Right ventricle myocardium superior (tissue), 1 donor: ENCODE measurements at regions of chr15 and their contacts with region 1.

Region 1: DNA sequence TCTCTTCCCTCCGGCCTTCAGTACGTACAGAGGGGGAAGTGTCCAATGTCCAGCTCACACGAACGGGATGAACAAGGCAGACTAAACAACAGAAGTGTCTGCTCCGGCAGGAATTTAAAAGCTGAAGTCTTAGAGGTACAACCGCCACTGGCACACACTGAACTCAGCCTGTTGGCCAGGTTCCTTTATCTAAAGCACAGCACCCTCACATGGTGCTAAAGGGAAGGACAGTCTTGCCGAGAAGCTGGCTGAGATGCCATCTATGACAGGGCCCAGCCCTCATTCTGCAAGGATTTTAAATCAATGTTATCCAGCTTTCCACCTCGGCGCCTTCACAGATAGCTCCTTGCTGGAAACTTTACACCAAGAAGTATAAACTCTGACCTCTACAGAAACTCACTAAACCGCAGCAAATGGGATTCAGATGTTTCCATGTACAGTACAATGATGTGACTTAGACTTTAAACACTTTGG is 2.8 kb downstream of the ADAMTS17 start:
- DNase-seq: peak; percentile 60
- ATAC-seq: peak; percentile 62

Region 2: DNA sequence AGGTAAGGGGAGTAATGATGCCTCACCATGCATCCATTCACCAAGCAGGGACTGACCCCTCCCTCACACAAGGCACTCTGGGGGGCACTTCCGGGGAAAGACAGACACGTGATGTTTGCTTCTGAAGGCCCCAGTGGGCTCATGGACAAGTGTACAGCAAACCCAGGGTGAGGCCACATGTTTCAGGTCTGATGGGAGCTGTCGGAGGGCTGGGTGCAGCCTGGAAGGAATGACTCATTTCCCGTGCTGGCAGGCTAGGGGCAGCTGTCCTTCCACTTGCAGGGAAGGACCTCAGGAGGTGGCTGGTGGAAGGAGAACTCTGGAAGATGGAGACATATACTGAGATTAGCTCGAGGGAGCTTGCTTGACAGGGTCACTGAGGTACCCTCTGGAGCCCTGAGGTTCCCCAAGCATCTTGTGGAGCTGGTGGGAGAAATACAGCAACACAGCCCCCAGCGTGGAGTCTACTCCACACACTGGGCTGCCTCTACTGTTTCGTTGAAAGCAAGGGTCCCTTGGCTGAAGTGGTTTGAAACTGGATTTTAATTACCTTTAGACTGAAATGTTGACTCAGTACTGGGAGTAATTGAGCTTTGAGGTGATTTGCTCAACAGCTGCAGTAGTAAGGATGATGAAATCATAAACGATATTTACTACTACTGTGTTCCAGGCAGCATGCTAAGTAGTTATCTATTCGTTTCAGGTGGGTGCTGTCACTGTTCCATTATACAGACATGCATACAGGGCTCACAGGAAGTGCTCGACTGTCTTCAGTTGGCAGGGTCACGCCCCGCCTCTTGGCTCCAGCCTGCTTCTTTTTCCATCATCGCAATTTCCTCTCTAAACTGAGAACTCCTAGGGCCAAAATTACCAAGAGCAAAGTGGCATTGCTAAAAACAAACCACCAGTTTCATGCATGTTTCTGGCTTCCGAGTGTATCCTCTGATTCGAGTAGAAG is 227.6 kb before region 1 on chr15:
- intact Hi-C with region 1: loop called (anchors 10 kb)
- DNase-seq: peak; percentile 75
- ATAC-seq: peak; percentile 35

Region 3: GRCh38 chr15:100694381-100695021 is 355.5 kb after region 1 on chr15:
- intact Hi-C with region 1: no loop called
- DNase-seq: no peak
- ATAC-seq: peak; percentile 69